Activated CD4-positive, alpha-beta memory T cell treated with anti-CD3 and anti-CD28 coated beads, Interleukin-2, amount 10 ng/mL, durations not matched to agents 7 days and 5 days (primary cell): ENCODE measurements at regions of chr6 and their contacts with region 1.

Region 1: DNA sequence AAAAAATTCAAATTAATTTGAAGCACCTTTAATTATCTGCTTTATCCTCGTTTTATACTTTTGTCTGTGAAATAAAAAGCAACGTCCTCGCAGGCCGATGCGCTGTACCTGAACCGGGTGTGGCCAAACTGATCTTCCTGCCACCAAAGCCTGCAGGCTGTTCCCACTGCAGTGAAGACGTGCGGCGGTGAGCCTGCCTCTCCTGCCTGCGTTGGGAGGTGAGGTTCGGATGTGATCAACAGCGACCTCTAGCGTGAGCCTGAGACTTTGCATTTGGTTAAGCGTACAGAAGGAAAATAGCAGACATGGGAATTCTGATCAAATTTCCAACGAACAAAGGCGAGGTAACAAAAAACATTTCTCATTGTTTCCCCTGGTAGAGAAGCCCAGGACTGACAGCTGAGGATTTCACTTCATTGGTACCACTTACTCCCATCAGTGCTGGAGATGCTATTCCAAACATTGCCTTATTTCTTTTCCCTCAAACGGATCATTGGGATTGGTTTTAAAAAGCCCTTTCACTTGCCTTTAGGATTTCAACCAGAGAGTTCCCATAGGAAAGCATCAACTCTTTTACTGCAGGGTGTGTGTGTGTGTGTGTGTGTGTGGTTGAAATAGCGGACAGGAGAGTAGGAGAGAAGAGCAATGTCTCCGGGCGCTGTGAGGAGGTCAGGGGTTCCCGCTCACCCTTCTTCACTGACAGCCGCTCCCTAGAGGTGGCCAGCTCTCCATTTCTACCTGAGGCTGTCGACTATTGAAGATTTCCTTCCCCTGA is 56.6 kb upstream of the CCN6 start:
- DNase-seq: peak; percentile 82
- H3K4me3 Mint-ChIP-seq: no peak overlapping the region
- H3K27ac Mint-ChIP-seq: no peak overlapping the region
- H3K4me1 Mint-ChIP-seq: peaks cover 40% of the 10 kb centered on the region
- H3K27me3 Mint-ChIP-seq: no peaks in the 10 kb centered on the region

Region 2: DNA sequence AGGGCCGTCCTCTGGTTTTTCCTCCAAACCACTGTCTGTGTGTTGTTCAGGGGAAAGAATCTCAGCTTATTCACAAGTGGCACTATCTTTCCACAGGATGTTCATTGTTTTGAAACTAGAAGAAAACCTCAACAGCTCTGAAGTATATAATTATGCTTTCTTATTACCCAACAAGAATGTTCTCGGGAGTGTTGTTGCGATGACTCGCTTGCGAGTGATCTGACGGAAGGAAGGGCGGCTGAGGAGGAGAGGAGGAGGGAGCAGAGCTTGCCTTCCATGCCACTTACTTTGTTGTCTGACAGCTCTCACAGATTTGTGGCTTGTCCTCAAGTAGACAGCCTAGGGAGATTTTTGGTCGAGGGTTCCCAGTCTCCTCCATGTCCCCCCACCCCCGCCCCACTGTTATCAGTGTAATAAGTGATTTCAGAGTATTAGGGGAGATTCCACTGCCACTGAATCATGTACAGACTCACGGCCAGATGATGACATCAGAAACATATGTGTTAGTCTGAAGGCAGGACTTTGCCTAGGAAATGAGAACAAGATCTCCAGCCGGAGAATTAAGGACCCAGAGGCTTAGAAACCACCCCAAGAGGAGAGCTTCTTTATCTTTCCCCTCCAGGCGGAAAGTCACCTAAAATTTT is 24.0 kb before region 1 on chr6:
- CTCF ChIA-PET with region 1: interaction called, 3 read pairs
- POLR2A ChIA-PET with region 1: interaction called, 10 read pairs
- DNase-seq: peak; percentile 52
- H3K4me3 Mint-ChIP-seq: peak overlapping the region; percentile 1
- H3K27ac Mint-ChIP-seq: peak overlapping the region; percentile 70
- H3K4me1 Mint-ChIP-seq: peaks cover 48% of the 10 kb centered on the region
- H3K27me3 Mint-ChIP-seq: peaks cover 2% of the 10 kb centered on the region